Calu3 (cell line): ENCODE measurements at regions of chr1 and their contacts with region 1.

Region 1: GRCh38 chr1:177355595-177355994 is 184.8 kb downstream of the BRINP2 start:
- DNase-seq: peak; percentile 63
- H3K4me3 Mint-ChIP-seq: no peak overlapping the region
- H3K27ac Mint-ChIP-seq: no peak overlapping the region
- H3K4me1 Mint-ChIP-seq: no peaks in the 10 kb centered on the region
- H3K27me3 Mint-ChIP-seq: peaks cover 24% of the 10 kb centered on the region
- CTCF ChIP-seq: peak; percentile 48

Region 2: GRCh38 chr1:177164380-177165068 is 191.1 kb before region 1 on chr1 and contains the start of gene ASTN1:
- CTCF ChIA-PET with region 1: no interaction called
- intact Hi-C with region 1: no loop called
- DNase-seq: no peak
- H3K4me3 Mint-ChIP-seq: no peak within 1 kb of the TSS
- H3K27ac Mint-ChIP-seq: no peak within 1 kb of the TSS
- H3K4me1 Mint-ChIP-seq: peaks cover 10% of the 10 kb centered on the region
- H3K27me3 Mint-ChIP-seq: peaks cover 63% of the 10 kb centered on the region
- CTCF ChIP-seq: no peak
- total RNA-seq, gene ASTN1: not detected in 2 replicates

Region 3: DNA sequence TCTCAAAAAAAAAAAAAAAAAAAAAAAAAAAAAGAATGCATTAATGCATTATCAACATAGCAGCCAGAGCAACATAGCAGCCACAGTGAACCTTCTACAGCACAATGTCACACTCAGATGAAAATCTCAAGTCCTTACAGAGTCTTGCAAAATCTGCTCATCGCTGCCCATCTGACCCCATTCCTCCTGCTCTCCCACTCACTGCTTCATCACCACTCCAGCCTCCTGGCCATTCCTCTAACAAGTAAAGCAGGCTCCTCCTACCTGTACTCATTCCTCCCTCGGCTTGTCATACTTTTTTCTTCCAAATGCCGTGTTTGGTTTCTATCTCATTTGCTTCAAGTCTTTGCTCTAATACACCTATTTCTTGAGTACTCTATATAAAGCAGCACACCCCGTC is 155.3 kb before region 1 on chr1:
- CTCF ChIA-PET with region 1: no interaction called
- intact Hi-C with region 1: loop called (anchors 5 kb)
- DNase-seq: no peak
- H3K4me3 Mint-ChIP-seq: no peak overlapping the region
- H3K27ac Mint-ChIP-seq: no peak overlapping the region
- H3K4me1 Mint-ChIP-seq: no peaks in the 10 kb centered on the region
- H3K27me3 Mint-ChIP-seq: peaks cover 40% of the 10 kb centered on the region
- CTCF ChIP-seq: no peak

Region 4: GRCh38 chr1:177256153-177257075 is 99.2 kb before region 1 on chr1:
- CTCF ChIA-PET with region 1: interaction called, 39 read pairs
- intact Hi-C with region 1: loop called (anchors 1 kb)
- DNase-seq: peak; percentile 92
- H3K4me3 Mint-ChIP-seq: peak overlapping the region; percentile 28
- H3K27ac Mint-ChIP-seq: peak overlapping the region; percentile 45
- H3K4me1 Mint-ChIP-seq: peaks cover 34% of the 10 kb centered on the region
- H3K27me3 Mint-ChIP-seq: no peaks in the 10 kb centered on the region
- CTCF ChIP-seq: peak; percentile 92

Region 5: DNA sequence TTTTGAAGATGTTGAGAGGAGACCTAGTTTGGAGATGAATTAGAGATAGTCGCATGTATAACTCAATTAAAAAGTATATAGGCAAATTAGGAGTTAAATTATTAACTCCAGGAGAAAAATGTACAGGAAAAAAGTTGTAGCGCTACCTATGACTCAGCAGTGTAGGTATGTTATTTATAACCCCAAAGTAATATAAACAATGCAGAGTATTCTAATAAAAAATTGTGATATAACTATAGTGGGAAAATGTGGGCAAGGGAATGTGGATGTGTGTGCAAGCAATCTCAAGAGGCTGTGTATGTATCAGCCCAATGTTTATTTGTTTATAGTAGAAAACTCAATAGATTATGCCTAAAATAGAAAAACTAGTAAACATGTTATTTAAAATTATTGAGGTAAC is 40.3 kb before region 1 on chr1:
- CTCF ChIA-PET with region 1: no interaction called
- intact Hi-C with region 1: loop called (anchors 5 kb)
- DNase-seq: no peak
- H3K4me3 Mint-ChIP-seq: peak overlapping the region; percentile 27
- H3K27ac Mint-ChIP-seq: peak overlapping the region; percentile 29
- H3K4me1 Mint-ChIP-seq: peaks cover 25% of the 10 kb centered on the region
- H3K27me3 Mint-ChIP-seq: no peaks in the 10 kb centered on the region
- CTCF ChIP-seq: no peak

Region 6: DNA sequence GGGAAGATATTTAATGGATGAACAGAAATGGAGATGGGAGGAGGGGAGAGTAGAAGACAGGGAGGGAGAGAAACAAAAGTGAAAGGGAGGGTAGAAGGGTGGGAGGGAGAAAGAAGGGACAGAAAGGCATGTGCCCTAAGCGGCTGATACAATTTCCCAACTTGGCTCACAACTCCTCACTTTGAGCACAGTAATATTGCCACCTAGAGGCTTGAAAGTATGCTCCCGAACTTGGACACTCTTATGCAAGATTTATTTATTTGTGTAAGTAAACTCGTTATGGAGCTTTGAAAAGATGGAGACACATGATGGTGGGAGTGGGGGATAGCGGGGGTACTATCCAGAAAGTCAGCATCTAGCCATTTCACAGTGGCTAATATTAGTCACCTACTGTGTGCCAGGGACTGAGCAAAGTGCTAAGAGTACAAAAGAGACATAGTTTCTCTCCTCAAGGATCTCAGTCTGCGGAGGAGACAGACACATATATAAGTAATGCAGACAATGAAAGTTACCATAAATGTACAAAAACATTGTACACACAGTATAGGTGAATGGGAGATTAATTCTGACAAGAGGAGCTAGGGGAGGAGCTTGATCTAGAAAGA is 424.6 kb after region 1 on chr1:
- CTCF ChIA-PET with region 1: no interaction called
- intact Hi-C with region 1: loop called (anchors 5 kb)
- DNase-seq: peak; percentile 23
- H3K4me3 Mint-ChIP-seq: no peak overlapping the region
- H3K27ac Mint-ChIP-seq: no peak overlapping the region
- H3K4me1 Mint-ChIP-seq: no peaks in the 10 kb centered on the region
- H3K27me3 Mint-ChIP-seq: peaks cover 64% of the 10 kb centered on the region
- CTCF ChIP-seq: peak; percentile 52